Posterior vena cava (tissue), 2 donors: ENCODE measurements at regions of chr21 and their contacts with region 1.

Region 1: GRCh38 chr21:31012133-31013089 is 25.9 kb downstream of the KRTAP19-8 start:
- DNase-seq: no peak

Region 2: GRCh38 chr21:31043471-31043870 is 31.1 kb after region 1 on chr21:
- intact Hi-C with region 1: loop called in 1 of 2 experiments (anchors 1 kb)
- DNase-seq: no peak